Head of caudate nucleus (tissue), 42 donors: ENCODE measurements at regions of chr14 and their contacts with region 1.

Region 1: DNA sequence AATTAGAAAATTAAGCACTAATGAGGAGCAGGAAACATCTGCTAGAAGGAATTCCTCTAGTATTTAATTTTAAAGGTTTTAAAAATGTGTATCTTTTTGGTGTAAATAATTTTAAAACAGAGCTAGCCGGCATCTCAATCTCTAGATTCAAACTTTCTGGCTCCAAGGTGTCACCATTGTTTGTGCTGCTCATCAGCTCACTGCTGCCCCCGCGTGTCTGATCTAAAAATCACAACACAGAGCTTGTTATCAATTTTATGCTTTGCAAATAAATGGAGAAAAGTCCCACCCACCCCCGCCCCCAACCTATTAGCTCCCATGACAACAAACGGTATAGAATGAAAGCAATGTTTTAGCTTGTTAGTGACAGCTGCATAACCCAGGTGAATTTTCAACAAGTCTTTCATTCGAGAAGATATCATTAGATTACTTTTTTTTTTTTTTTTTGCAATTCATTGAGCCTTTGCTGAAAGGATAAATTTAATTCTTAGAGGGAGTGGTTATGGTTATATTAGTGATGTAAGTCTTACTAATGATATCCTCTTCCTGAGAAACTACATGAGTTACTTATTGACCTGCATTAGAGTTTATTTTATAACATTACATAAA is 11.3 kb upstream of the ABHD12B start:
- DNase-seq: peak; percentile 53 to 96 (median 89)

Region 2: DNA sequence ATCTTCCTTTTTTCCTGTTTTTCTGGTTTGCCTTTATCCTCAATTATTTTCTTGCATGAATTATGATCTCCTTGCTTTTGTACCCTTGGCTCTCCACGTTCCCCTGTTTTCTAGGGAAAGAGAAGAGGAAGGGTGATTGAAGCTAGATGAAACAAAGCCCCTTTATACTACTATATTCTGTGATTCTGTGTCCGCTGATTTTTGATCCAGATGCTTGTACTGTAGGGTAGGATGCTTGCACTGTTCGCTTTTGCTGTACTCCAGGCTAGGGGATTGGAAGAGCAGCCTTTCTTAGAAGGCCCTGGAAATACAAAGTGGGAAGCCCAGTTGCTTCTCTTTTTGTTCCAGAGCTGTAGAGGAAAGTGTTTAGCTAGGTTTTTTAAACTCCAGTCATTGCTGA is 1127.7 kb before region 1 on chr14:
- intact Hi-C with region 1: no loop called
- DNase-seq: peak in 6 of 42 donors; percentile 2 to 47 (median 8)

Region 3: DNA sequence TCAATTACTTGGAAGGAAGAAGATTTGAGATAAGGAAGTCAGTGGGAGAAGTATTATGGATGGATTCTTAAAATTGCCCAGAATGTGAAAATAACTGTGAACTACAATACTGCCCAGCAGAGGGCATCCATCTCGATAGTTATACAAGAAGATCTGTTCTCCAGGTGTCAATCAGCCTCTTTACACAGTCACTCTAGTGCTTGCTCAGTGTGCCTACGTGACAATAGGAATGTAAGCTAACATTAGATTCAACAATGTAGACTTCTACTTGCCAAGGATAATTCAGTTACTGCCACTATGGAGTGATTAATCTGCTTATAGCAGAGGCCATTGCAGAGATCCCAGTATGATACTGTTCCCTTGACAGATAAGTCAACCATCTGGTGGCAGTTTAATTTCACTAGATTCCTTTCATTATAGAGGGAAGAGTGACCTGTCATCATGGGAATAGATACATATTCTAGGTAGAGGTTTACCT is 317.6 kb before region 1 on chr14:
- intact Hi-C with region 1: no loop called
- DNase-seq: peak in 26 of 42 donors; percentile 6 to 83 (median 50)

Region 4: GRCh38 chr14:50714450-50715073 is 146.0 kb before region 1 on chr14:
- intact Hi-C with region 1: no loop called
- DNase-seq: peak in 12 of 42 donors; percentile 22 to 67 (median 38)

Region 5: DNA sequence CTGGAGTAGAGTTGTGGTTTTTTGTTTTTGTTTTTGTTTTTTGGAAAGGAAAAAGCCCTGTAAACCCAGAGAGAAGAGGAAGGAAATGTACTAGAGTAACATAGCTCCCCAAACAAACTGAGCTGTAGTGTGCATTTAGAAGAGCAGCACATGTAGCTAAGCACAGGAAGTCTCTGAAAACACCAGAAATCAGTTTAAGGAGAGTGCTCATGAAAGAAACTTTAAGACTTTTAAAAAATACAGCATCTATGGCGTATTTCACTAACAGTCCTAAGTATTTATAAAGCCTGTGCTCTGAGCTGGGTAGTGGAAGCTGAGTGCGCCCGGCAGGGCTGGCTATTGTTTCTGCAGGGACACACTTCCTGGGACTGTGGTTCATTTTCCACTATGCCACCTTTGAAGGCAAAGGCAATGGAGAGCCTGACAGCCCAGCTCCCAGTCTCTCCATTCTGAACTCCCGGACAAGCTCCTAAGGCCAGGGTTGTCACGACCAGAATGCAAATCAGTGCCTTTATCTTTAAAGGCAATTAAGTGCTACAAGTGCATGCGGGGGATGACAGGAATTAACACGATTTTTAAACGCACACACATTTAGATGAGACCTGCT is 75.0 kb before region 1 on chr14:
- intact Hi-C with region 1: loop called (anchors 10 kb)
- DNase-seq: peak in 1 of 42 donors; percentile 21